Activated CD8-positive, alpha-beta T cell treated with anti-CD3 and anti-CD28 coated beads for 36 hours (primary cell): ENCODE measurements at regions of chr7 and their contacts with region 1.

Region 1: GRCh38 chr7:39589323-39590111 is 23.3 kb downstream of the YAE1 start:
- DNase-seq: peak; percentile 92
- ATAC-seq: peak; percentile 83
- H3K4me3 Mint-ChIP-seq: peak overlapping the region; percentile 34
- H3K27ac Mint-ChIP-seq: peak overlapping the region; percentile 79
- H3K4me1 Mint-ChIP-seq: peaks cover 51% of the 10 kb centered on the region
- H3K27me3 Mint-ChIP-seq: no peaks in the 10 kb centered on the region
- CTCF ChIP-seq: no peak

Region 2: DNA sequence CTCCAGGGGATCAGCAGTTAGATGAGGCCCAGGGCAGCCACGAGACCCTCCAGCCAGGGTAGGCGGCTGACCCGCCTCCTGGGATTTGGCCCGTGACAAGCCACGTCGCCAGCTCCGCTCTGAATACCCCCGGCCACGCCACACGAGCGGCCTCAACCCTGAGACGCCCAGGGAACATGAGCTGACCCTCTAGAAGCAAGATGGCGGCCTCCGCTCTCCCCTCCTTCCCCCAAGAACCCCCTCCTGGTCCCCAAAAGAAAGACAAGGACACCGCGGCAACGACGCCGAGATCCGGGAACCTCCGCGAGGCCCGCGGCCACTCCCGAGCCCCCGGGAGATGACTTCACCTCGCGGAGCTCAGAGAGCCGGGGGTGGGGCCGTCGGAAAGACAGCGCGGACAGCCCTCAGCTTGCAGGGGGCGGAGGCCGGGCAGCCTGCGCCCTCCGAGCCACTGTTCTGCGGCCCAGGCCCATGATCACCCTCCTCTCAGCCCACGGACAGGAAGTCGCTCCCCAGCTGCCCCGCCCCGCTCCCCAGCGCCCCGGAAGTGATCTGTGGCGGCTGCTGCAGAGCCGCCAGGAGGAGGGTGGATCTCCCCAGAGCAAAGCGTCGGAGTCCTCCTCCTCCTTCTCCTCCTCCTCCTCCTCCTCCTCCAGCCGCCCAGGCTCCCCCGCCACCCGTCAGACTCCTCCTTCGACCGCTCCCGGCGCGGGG is 33.7 kb after region 1 on chr7 and contains the start of gene RALA:
- CTCF ChIA-PET with region 1: interaction called, 5 read pairs
- POLR2A ChIA-PET with region 1: interaction called, 4 read pairs
- intact Hi-C with region 1: loop called (anchors 5 kb)
- DNase-seq: peak; percentile 90
- ATAC-seq: peak; percentile 96
- H3K4me3 Mint-ChIP-seq: peak within 1 kb of the TSS; percentile 99
- H3K27ac Mint-ChIP-seq: peak within 1 kb of the TSS; percentile 95
- H3K4me1 Mint-ChIP-seq: peaks cover 47% of the 10 kb centered on the region
- H3K27me3 Mint-ChIP-seq: no peaks in the 10 kb centered on the region
- CTCF ChIP-seq: no peak
- total RNA-seq, gene RALA: 32.5 to 32.8 TPM

Region 3: GRCh38 chr7:39746103-39746819 is 156.7 kb after region 1 on chr7:
- CTCF ChIA-PET with region 1: interaction called, 20 read pairs
- POLR2A ChIA-PET with region 1: no interaction called
- intact Hi-C with region 1: no loop called
- DNase-seq: peak; percentile 74
- ATAC-seq: no peak
- H3K4me3 Mint-ChIP-seq: no peak overlapping the region
- H3K27ac Mint-ChIP-seq: peak overlapping the region; percentile 5
- H3K4me1 Mint-ChIP-seq: peaks cover 14% of the 10 kb centered on the region
- H3K27me3 Mint-ChIP-seq: no peaks in the 10 kb centered on the region
- CTCF ChIP-seq: peak; percentile 73